SK-N-SH (cell line): ENCODE measurements at regions of chr6 and their contacts with region 1.

Region 1: DNA sequence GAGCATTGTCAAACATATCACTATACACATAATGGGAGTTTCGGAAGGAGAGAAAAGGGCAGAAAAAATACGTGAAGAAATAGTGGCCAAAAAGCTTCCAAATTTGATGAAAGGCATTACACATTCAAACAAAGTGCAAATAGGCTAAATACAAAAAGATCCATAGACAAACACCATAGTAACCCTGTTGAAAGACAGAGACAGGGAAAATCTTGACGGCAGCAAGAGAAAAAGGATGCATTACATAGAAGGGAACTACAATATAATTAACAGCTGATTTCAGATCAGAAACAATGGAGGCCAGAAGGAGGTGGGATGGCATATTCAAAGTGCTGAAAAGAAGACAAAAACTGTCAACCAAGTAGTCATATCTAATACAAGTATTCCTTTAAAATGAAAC is 170.8 kb downstream of the MRPL14 start:
- DNase-seq: no peak
- H3K4me3 ChIP-seq: no peak overlapping the region
- H3K27ac ChIP-seq: no peak overlapping the region
- H3K4me1 ChIP-seq: peaks cover 0 to 32% of the 10 kb centered on the region in 2 experiments; a peak in 1 of 4 replicates
- H3K27me3 ChIP-seq: 0 out of 2 replicates have a peak, but pooled peaks cover 4% of the 10 kb centered on the region
- CTCF ChIP-seq: no peak
- EP300 ChIP-seq: no peak
- RAD21 ChIP-seq: no peak

Region 2: DNA sequence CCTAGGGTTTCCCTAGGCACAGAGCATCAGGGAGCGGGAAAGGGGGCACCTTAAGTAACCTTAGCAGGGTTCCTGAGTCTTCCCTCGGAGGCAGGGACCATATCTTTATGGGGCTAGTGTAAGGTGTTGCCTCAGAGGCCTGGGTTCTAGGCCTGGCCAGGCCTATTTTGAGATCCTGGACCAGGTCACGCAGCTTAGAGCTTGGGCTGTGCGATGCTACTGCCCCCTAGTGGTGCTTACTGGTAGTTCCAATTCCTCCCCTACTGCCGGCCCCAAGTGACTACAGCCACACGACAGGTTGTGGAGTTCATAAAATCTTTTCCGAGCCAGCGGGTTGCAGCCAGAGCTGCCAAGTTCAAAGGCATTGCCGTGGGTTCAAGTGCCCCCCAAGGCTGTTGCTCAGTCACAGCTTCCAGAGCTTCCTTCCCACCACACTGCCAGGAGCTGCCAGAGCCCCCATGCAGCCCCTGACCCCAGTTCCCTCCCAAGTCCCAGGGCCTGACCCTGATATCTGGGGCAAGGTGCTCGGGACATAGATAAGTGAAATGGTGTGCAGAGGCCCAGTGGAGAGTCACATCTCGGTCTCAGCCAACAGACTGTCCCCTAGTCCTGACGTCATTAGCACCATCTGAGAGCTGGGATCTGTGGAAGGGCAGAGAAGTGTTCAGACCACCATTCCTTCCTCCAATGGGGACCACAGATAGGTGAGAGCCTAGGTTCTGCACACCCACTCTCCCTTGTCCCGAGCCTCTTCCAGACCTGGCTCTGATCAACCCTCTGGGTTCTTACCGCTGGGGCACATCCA is 449.6 kb before region 1 on chr6:
- CTCF ChIA-PET with region 1: no interaction called
- POLR2A ChIA-PET with region 1: no interaction called
- DNase-seq: peak; percentile 89
- H3K4me3 ChIP-seq: no peak overlapping the region; a peak in 1 of 4 replicates
- H3K27ac ChIP-seq: no peak overlapping the region; a peak in 1 of 4 replicates
- H3K4me1 ChIP-seq: peaks cover 0 to 26% of the 10 kb centered on the region in 2 experiments; a peak in 1 of 4 replicates
- H3K27me3 ChIP-seq: no peaks in the 10 kb centered on the region
- CTCF ChIP-seq: peak; percentile 91
- EP300 ChIP-seq: 0 out of 4 replicates have a peak, but pooled peaks of 1 of the 2 experiments have one; percentile 16
- RAD21 ChIP-seq: peak; percentile 94

Region 3: GRCh38 chr6:43695215-43695966 is 261.1 kb before region 1 on chr6:
- CTCF ChIA-PET with region 1: no interaction called
- POLR2A ChIA-PET with region 1: no interaction called
- DNase-seq: no peak
- H3K4me3 ChIP-seq: no peak overlapping the region
- H3K27ac ChIP-seq: no peak overlapping the region
- H3K4me1 ChIP-seq: peaks cover 0 to 10% of the 10 kb centered on the region in 2 experiments; a peak in 1 of 4 replicates
- H3K27me3 ChIP-seq: no peaks in the 10 kb centered on the region
- CTCF ChIP-seq: no peak
- EP300 ChIP-seq: no peak
- RAD21 ChIP-seq: no peak

Region 4: GRCh38 chr6:43972913-43973300 is 16.4 kb after region 1 on chr6:
- CTCF ChIA-PET with region 1: interaction called, 13 read pairs
- POLR2A ChIA-PET with region 1: no interaction called
- DNase-seq: no peak
- H3K4me3 ChIP-seq: no peak overlapping the region
- H3K27ac ChIP-seq: peak overlapping the region; percentile 42 to 81
- H3K4me1 ChIP-seq: peaks cover 9 to 43% of the 10 kb centered on the region in 2 experiments; a peak in 3 of 4 replicates
- H3K27me3 ChIP-seq: no peaks in the 10 kb centered on the region
- CTCF ChIP-seq: no peak
- EP300 ChIP-seq: no peak
- RAD21 ChIP-seq: no peak

Region 5: GRCh38 chr6:44138717-44139350 is 182.4 kb after region 1 on chr6:
- CTCF ChIA-PET with region 1: no interaction called
- POLR2A ChIA-PET with region 1: no interaction called
- DNase-seq: no peak
- H3K4me3 ChIP-seq: no peak overlapping the region
- H3K27ac ChIP-seq: no peak overlapping the region
- H3K4me1 ChIP-seq: peaks cover 0 to 2% of the 10 kb centered on the region in 2 experiments; a peak in 1 of 4 replicates
- H3K27me3 ChIP-seq: no peaks in the 10 kb centered on the region
- CTCF ChIP-seq: no peak
- EP300 ChIP-seq: no peak
- RAD21 ChIP-seq: no peak